PC-3 (cell line): ENCODE measurements at regions of chr10 and their contacts with region 1.

Region 1: GRCh38 chr10:78520737-78521430 is 487.2 kb downstream of the RPS24 start:
- DNase-seq: peak; percentile 100
- ATAC-seq: peak; percentile 100
- H3K4me3 ChIP-seq: no peak overlapping the region
- H3K27ac ChIP-seq: peak overlapping the region; percentile 42
- H3K4me1 ChIP-seq: peaks cover 31% of the 10 kb centered on the region
- H3K27me3 ChIP-seq: no peaks in the 10 kb centered on the region
- CTCF ChIP-seq: peak; percentile 99

Region 2: DNA sequence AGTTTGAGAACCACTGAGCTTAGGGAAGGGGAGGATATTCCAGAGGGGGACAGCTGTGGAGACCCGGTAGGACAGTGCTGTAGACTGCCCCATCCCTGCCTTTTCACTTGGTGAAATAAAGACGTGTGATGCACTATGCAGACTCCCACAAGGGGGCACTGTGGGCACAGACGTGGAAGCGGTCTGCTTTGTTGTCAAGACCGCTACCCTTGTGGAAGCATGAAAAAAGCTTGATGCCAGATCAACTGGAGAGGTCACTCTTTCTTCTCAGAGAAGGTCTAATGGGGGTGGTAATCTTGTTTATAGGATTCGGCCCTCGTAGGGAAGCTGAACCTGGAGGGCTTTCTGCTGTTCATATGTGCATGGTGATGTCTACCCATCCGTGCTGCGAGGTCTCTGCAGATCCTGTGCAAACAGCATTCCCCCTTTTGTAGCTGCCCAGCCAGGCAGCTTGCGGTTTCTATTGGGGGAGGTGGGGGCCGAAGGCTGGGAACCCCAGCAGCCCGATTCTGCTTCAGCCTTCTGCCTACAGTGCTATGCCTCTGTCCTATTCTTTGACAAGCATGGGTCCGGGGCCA is 473.5 kb before region 1 on chr10:
- CTCF ChIA-PET with region 1: no interaction called
- POLR2A ChIA-PET with region 1: no interaction called
- intact Hi-C with region 1: loop called (anchors 1 kb)
- DNase-seq: peak; percentile 100
- ATAC-seq: peak; percentile 75
- H3K4me3 ChIP-seq: no peak overlapping the region
- H3K27ac ChIP-seq: no peak overlapping the region
- H3K4me1 ChIP-seq: no peaks in the 10 kb centered on the region
- H3K27me3 ChIP-seq: no peaks in the 10 kb centered on the region
- CTCF ChIP-seq: peak; percentile 100

Region 3: GRCh38 chr10:78231939-78232338 is 288.9 kb before region 1 on chr10:
- CTCF ChIA-PET with region 1: no interaction called
- POLR2A ChIA-PET with region 1: no interaction called
- intact Hi-C with region 1: loop called (anchors 1 kb)
- DNase-seq: peak; percentile 79
- ATAC-seq: peak; percentile 71
- H3K4me3 ChIP-seq: no peak overlapping the region
- H3K27ac ChIP-seq: no peak overlapping the region
- H3K4me1 ChIP-seq: no peaks in the 10 kb centered on the region
- H3K27me3 ChIP-seq: peaks cover 71% of the 10 kb centered on the region
- CTCF ChIP-seq: peak; percentile 96

Region 4: DNA sequence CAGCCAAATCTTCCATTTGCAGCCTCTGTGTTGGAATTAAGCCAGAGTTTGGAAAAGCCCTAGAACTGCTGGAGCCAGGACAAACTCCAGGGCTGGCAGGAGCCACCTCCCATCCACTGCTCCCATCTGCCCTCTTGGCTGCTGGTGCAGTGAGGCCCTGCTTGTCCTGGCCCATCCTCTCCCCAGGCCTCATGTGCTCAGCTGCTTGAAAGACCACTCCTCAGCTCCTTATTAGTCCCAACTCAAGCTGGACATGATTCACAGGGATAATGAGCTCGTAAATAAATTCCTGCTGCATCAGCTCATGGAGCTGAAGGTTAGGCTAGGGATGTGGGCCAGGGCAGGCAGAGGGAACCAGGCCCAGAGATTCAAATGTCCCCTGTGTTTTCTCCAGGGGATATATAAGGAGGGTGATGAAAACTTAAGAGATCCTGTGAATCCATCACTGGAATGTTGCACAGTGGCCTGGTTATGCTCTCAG is 204.4 kb before region 1 on chr10:
- CTCF ChIA-PET with region 1: no interaction called
- POLR2A ChIA-PET with region 1: no interaction called
- intact Hi-C with region 1: loop called (anchors 5 kb)
- DNase-seq: peak; percentile 98
- ATAC-seq: peak; percentile 95
- H3K4me3 ChIP-seq: no peak overlapping the region
- H3K27ac ChIP-seq: no peak overlapping the region
- H3K4me1 ChIP-seq: peaks cover 12% of the 10 kb centered on the region
- H3K27me3 ChIP-seq: peaks cover 22% of the 10 kb centered on the region
- CTCF ChIP-seq: no peak

Region 5: GRCh38 chr10:78357141-78358063 is 163.5 kb before region 1 on chr10:
- CTCF ChIA-PET with region 1: no interaction called
- POLR2A ChIA-PET with region 1: no interaction called
- intact Hi-C with region 1: no loop called
- DNase-seq: no peak
- ATAC-seq: no peak
- H3K4me3 ChIP-seq: no peak overlapping the region
- H3K27ac ChIP-seq: no peak overlapping the region
- H3K4me1 ChIP-seq: no peaks in the 10 kb centered on the region
- H3K27me3 ChIP-seq: peaks cover 82% of the 10 kb centered on the region
- CTCF ChIP-seq: no peak

Region 6: GRCh38 chr10:78407009-78407711 is 113.7 kb before region 1 on chr10:
- CTCF ChIA-PET with region 1: no interaction called
- POLR2A ChIA-PET with region 1: no interaction called
- intact Hi-C with region 1: no loop called
- DNase-seq: peak; percentile 100
- ATAC-seq: peak; percentile 95
- H3K4me3 ChIP-seq: peak overlapping the region; percentile 53
- H3K27ac ChIP-seq: no peak overlapping the region
- H3K4me1 ChIP-seq: peaks cover 13% of the 10 kb centered on the region
- H3K27me3 ChIP-seq: peaks cover 28% of the 10 kb centered on the region
- CTCF ChIP-seq: no peak

Region 7: GRCh38 chr10:78432583-78432982 is 88.3 kb before region 1 on chr10:
- CTCF ChIA-PET with region 1: no interaction called
- POLR2A ChIA-PET with region 1: no interaction called
- intact Hi-C with region 1: loop called (anchors 1 kb)
- DNase-seq: peak; percentile 69
- ATAC-seq: peak; percentile 79
- H3K4me3 ChIP-seq: no peak overlapping the region
- H3K27ac ChIP-seq: no peak overlapping the region
- H3K4me1 ChIP-seq: peaks cover 13% of the 10 kb centered on the region
- H3K27me3 ChIP-seq: peaks cover 39% of the 10 kb centered on the region
- CTCF ChIP-seq: peak; percentile 78

Region 8: GRCh38 chr10:78543749-78544362 is 23.0 kb after region 1 on chr10:
- CTCF ChIA-PET with region 1: no interaction called
- POLR2A ChIA-PET with region 1: no interaction called
- intact Hi-C with region 1: no loop called
- DNase-seq: no peak
- ATAC-seq: no peak
- H3K4me3 ChIP-seq: no peak overlapping the region
- H3K27ac ChIP-seq: no peak overlapping the region
- H3K4me1 ChIP-seq: peaks cover 2% of the 10 kb centered on the region
- H3K27me3 ChIP-seq: peaks cover 56% of the 10 kb centered on the region
- CTCF ChIP-seq: no peak

Region 9: GRCh38 chr10:78566284-78567111 is 45.6 kb after region 1 on chr10:
- CTCF ChIA-PET with region 1: interaction called, 11 read pairs
- POLR2A ChIA-PET with region 1: no interaction called
- intact Hi-C with region 1: no loop called
- DNase-seq: no peak
- ATAC-seq: no peak
- H3K4me3 ChIP-seq: no peak overlapping the region
- H3K27ac ChIP-seq: no peak overlapping the region
- H3K4me1 ChIP-seq: 0 out of 2 replicates have a peak, but pooled peaks cover 4% of the 10 kb centered on the region
- H3K27me3 ChIP-seq: peaks cover 66% of the 10 kb centered on the region
- CTCF ChIP-seq: no peak